Posterior cingulate gyrus (tissue), 11 donors: ENCODE measurements at regions of chr20 and their contacts with region 1.

Region 1: GRCh38 chr20:4956200-4956810 is 45.0 kb downstream of the SLC23A2 start:
- DNase-seq: peak in 1 of 10 donors; percentile 9

Region 2: DNA sequence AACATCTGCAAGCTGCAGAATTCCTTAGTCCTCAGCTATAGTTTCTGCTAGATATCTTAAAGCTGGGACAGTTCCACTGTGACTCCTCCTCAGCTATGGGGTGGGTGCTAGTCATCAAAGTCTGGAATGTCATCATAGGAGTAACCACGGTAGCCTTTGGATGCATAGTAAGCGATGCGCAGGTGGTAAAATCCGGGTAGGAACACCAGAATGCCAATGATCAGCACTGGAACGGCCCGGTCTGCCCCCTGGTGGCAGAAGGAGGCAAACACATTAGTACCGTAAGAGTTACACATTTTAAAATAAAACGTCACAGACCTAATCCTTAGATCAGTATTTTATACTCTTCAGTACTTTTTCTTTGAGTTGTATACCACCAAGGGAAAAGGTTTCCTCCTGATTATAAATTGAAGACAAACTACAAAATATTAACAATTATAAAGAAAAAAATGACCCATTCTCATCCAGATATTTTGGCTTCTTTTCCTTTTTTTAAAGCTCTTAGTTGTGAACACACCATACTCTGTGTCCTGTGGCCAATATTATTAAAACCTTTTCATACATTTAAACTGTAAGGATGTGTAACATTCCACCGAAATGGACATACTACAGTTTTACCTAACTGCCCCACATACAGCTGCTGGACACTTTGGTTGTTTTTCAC is 144.5 kb after region 1 on chr20:
- intact Hi-C with region 1: loop called (anchors 5 kb)
- DNase-seq: peak; percentile 63 to 97 (median 86)